Heart left ventricle (tissue), 16 donors: ENCODE measurements at regions of chr16 and their contacts with region 1.

Region 1: GRCh38 chr16:17578921-17579874 is 108.4 kb upstream of the XYLT1 start:
- DNase-seq: peak in 4 of 5 donors; percentile 30 to 47 (median 39)
- ATAC-seq: peak; percentile 67 to 80 (median 76)
- H3K4me3 ChIP-seq: no peak overlapping the region
- H3K27ac ChIP-seq: no peak overlapping the region
- H3K4me1 ChIP-seq: peaks cover 0 to 7% (median 0%) of the 10 kb centered on the region in 12 donors
- H3K27me3 ChIP-seq: no peaks in the 10 kb centered on the region
- CTCF ChIP-seq: peak; percentile 65 to 87 (median 78)
- POLR2A ChIP-seq: no peak

Region 2: DNA sequence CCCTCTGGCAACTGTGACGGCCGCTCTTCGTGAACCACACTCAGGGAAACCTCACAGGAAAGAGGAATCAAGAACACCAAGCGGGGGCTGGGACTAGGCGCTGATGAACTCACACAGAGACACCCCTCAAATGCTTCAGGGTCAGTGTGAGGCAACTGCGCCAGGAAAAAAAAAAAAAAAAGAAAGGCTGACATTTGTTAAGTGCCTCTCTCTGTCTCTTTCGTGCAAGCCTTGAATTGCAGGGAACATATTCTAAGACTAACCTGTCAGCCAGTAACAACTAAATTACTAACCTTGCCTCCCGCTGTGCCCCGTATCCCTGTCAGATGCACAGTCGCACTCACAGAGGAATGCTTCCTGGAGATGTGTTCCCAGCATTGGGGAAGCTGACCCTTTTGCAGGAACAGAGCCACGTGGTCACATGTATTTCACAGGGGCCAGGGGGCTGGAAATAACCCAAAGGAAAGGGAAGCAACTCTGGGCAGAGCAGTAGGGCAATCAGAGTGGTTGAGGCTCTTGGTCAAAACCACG is 356.3 kb before region 1 on chr16:
- intact Hi-C with region 1: no loop called
- DNase-seq: peak in 2 of 5 donors; percentile 11 to 35
- ATAC-seq: peak in 1 of 4 donors; percentile 5
- H3K4me3 ChIP-seq: no peak overlapping the region
- H3K27ac ChIP-seq: peak overlapping the region in 1 of 12 donors; percentile 79
- H3K4me1 ChIP-seq: peaks cover 0 to 30% (median 11%) of the 10 kb centered on the region in 12 donors
- H3K27me3 ChIP-seq: no peaks in the 10 kb centered on the region
- CTCF ChIP-seq: no peak
- POLR2A ChIP-seq: no peak

Region 3: GRCh38 chr16:17476414-17477270 is 102.6 kb before region 1 on chr16:
- intact Hi-C with region 1: loop called in 2 of 10 experiments (anchors 5 to 10 kb)
- DNase-seq: peak in 1 of 5 donors; percentile 18
- ATAC-seq: peak; percentile 30 to 76 (median 54)
- H3K4me3 ChIP-seq: no peak overlapping the region
- H3K27ac ChIP-seq: no peak overlapping the region
- H3K4me1 ChIP-seq: peaks cover 0 to 16% (median 0%) of the 10 kb centered on the region in 12 donors
- H3K27me3 ChIP-seq: peaks cover 0 to 31% (median 10%) of the 10 kb centered on the region in 9 donors
- CTCF ChIP-seq: peak in 10 of 12 donors; percentile 29 to 60 (median 47)
- POLR2A ChIP-seq: no peak

Region 4: GRCh38 chr16:17633104-17633951 is 54.1 kb after region 1 on chr16:
- intact Hi-C with region 1: loop called in 1 of 10 experiments (anchors 10 kb)
- DNase-seq: no peak
- ATAC-seq: no peak
- H3K4me3 ChIP-seq: no peak overlapping the region
- H3K27ac ChIP-seq: no peak overlapping the region
- H3K4me1 ChIP-seq: no peaks in the 10 kb centered on the region
- H3K27me3 ChIP-seq: peaks cover 0 to 9% (median 0%) of the 10 kb centered on the region in 9 donors
- CTCF ChIP-seq: no peak
- POLR2A ChIP-seq: no peak

Region 5: DNA sequence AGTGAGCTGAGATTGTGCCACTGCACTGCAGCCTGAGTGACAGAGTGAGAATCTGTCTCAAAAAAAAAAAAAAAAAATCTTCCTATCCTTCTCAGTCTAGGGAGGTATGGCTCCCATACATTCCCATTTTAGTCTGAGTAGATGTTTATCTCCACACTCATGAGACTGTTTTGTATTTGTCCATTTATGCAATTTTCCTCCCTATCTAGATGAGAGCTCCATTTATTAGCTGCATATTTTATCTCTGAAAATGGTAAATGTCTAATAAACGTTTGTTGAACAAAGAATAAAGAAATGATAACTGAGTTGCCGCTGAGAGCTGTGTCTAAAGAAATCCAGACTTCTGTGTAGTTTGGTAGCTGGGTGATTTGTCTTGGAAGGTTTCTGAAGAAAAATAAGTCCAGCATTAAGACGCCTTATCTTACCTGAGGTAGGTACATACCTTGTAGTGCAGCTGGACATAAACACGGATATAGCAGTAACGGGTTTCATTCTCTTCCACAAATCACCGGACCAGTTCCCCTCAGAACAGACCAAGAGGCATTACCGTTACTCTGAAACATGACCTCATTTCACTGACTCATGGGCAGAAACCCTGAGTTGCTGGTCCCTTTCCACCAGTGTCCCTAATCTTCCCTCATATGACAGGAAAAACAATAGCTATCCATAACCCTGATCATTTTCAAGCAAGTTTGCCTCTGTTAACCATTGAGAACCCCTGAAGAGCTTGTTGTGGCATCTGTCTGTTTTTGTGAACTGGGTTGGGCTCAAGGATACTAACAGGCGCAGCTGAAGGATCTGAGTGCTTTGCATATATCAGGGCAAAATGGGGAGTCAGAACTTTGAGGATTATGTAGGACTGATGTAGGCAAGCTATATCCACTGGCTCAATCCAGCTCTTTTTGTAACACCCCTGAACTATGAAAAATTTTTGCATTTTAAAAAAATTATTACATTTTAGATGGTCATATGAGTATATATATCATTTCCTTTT is 69.0 kb after region 1 on chr16:
- intact Hi-C with region 1: no loop called
- DNase-seq: no peak
- ATAC-seq: no peak
- H3K4me3 ChIP-seq: no peak overlapping the region
- H3K27ac ChIP-seq: no peak overlapping the region
- H3K4me1 ChIP-seq: no peaks in the 10 kb centered on the region
- H3K27me3 ChIP-seq: peaks cover 0 to 20% (median 0%) of the 10 kb centered on the region in 9 donors
- CTCF ChIP-seq: no peak
- POLR2A ChIP-seq: no peak